Posterior cingulate gyrus (tissue), 11 donors: ENCODE measurements at regions of chr4 and their contacts with region 1.

Region 1: DNA sequence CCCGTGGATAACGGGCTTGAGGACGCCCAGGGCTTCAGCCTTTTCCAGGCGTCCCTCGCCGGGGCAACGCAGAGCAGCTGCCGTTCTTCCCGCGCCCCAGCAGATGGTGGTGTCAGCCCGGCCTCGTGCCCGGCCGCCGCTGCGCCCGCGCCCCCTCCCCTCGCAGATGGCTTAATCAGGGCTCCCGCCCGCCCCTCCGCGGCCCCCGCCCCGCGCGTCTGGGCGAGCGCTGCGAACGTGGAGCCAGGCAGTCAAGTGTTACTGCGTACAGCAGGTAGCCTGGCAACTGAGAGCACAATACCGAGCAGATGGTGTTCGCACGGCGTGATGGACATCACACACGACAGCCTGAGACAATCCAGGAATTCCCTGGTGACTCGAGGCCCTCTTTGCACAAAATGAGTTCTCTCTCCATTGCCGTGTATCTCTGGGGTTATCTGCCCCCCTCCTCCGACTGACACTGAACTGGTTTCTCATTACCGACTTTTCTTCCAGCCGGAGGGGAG is 69.3 kb downstream of the MGST2 start:
- DNase-seq: peak; percentile 78 to 98 (median 88)

Region 2: DNA sequence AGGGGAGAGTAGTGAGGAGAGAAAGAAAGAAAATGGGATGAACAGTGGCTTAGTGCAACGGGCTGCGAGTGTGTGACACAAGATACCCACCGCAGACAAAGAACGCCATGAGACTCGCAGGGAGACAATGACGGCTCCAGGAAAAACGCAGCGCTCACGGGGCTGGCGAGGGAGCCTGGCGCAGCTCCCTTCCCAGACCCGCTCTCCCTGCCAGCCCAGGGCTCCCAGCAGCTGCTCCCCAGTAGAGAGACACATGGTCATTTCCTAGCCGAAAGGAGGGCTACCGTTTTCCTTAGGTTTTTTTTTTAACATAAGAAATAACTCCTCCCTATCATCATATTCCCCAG is 269.6 kb after region 1 on chr4:
- intact Hi-C with region 1: loop called (anchors 10 kb)
- DNase-seq: peak; percentile 34 to 91 (median 46)

Region 3: GRCh38 chr4:140252742-140253555 is 518.0 kb after region 1 on chr4:
- intact Hi-C with region 1: loop called (anchors 1 kb)
- DNase-seq: peak; percentile 65 to 97 (median 78)

Region 4: DNA sequence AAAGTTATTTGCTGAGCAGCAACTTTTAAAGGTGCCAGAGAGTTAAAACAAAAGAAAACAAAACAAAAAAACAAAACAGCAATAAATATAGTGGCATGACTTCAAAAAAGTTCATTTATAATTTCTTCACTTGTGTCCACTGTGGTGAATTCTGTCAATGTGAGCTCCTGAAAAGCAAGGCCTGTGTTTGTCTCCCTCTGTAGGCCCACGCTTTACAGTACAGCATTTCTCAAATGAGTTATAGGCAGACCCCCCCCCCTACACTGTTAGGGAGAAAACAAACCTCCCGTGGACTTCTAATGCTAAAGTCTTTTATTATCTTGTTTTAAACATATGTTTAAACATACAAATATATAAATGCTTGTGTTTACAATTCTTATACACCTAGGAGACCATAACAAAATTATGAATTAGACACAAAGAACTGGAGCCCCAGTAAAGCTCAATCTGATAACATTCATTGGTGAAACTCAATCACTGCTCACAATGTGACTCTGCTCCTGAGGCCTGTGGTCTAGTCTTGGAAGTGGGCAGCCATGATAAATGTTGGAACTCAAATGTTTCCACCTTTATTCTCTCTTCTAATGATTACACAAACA is 591.6 kb after region 1 on chr4:
- intact Hi-C with region 1: loop called (anchors 2 kb)
- DNase-seq: peak in 5 of 10 donors; percentile 14 to 87 (median 50)

Region 5: GRCh38 chr4:140609548-140610425 is 874.9 kb after region 1 on chr4:
- intact Hi-C with region 1: loop called (anchors 10 kb)
- DNase-seq: peak in 1 of 10 donors; percentile 14